PC-9 (cell line): ENCODE measurements at regions of chr17 and their contacts with region 1.

Region 1: GRCh38 chr17:29483503-29483902 is 83.3 kb downstream of the ABHD15 start:
- DNase-seq: no peak
- H3K4me3 ChIP-seq: no peak overlapping the region
- H3K27ac ChIP-seq: no peak overlapping the region
- H3K4me1 ChIP-seq: no peaks in the 10 kb centered on the region
- H3K27me3 ChIP-seq: no peaks in the 10 kb centered on the region
- CTCF ChIP-seq: no peak

Region 2: DNA sequence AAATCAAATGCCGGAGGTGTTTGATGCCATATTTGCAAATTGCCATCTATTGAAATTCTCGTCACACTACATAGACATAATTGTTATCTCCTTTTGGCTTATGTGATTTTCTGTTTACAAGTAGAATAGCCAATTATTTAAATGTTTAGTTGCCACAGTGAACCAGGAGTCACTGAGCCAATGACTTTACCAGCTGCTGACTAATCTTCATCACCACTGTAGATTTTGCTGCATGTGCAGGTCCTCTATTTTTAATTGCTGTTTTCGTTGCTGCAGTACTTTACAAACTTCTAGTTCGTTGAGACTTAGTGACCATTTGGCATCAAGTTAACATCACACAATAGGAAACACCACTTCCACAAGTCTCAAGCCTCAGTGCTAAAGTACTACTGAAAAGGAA is 60.6 kb after region 1 on chr17:
- CTCF ChIA-PET with region 1: no interaction called
- POLR2A ChIA-PET with region 1: no interaction called
- intact Hi-C with region 1: no loop called
- DNase-seq: no peak
- H3K4me3 ChIP-seq: no peak overlapping the region
- H3K27ac ChIP-seq: no peak overlapping the region
- H3K4me1 ChIP-seq: no peaks in the 10 kb centered on the region
- H3K27me3 ChIP-seq: no peaks in the 10 kb centered on the region
- CTCF ChIP-seq: no peak

Region 3: GRCh38 chr17:29613352-29613837 is 129.9 kb after region 1 on chr17:
- CTCF ChIA-PET with region 1: interaction called, 11 read pairs
- POLR2A ChIA-PET with region 1: no interaction called
- intact Hi-C with region 1: no loop called
- DNase-seq: no peak
- H3K4me3 ChIP-seq: no peak overlapping the region
- H3K27ac ChIP-seq: no peak overlapping the region
- H3K4me1 ChIP-seq: no peaks in the 10 kb centered on the region
- H3K27me3 ChIP-seq: no peaks in the 10 kb centered on the region
- CTCF ChIP-seq: no peak